HepG2 (cell line): ENCODE measurements at regions of chr4 and their contacts with region 1.

Region 1: GRCh38 chr4:5998333-5998936 is 19.8 kb downstream of the C4orf50 start:
- DNase-seq: peak; percentile 50
- ATAC-seq: peak; percentile 91
- H3K4me3 ChIP-seq: no peak overlapping the region
- H3K27ac ChIP-seq: no peak overlapping the region
- H3K4me1 ChIP-seq: no peaks in the 10 kb centered on the region
- H3K27me3 ChIP-seq: peaks cover 6 to 42% of the 10 kb centered on the region in 2 experiments; a peak in 4 of 5 replicates
- CTCF ChIP-seq: peak; percentile 92
- EP300 ChIP-seq: no peak
- POLR2A ChIP-seq: no peak
- RAD21 ChIP-seq: peak; percentile 75

Region 2: GRCh38 chr4:5979976-5980375 is 18.5 kb before region 1 on chr4:
- CTCF ChIA-PET with region 1: no interaction called
- POLR2A ChIA-PET with region 1: no interaction called
- in situ Hi-C with region 1: no loop called
- intact Hi-C with region 1: no loop called
- DNase-seq: no peak
- ATAC-seq: peak; percentile 57; the same call in 2 of the 3 replicates
- H3K4me3 ChIP-seq: no peak overlapping the region
- H3K27ac ChIP-seq: no peak overlapping the region
- H3K4me1 ChIP-seq: no peaks in the 10 kb centered on the region
- H3K27me3 ChIP-seq: peaks cover 5% of the 10 kb centered on the region in 2 experiments; a peak in 2 of 5 replicates
- CTCF ChIP-seq: peak; percentile 61
- EP300 ChIP-seq: no peak
- POLR2A ChIP-seq: no peak
- RAD21 ChIP-seq: no peak

Region 3: GRCh38 chr4:6087673-6088341 is 89.4 kb after region 1 on chr4:
- CTCF ChIA-PET with region 1: interaction called, 35 read pairs
- POLR2A ChIA-PET with region 1: no interaction called
- in situ Hi-C with region 1: loop called (anchors 5 kb)
- intact Hi-C with region 1: loop called (anchors 1 kb)
- DNase-seq: peak; percentile 39
- ATAC-seq: peak; percentile 88
- H3K4me3 ChIP-seq: no peak overlapping the region
- H3K27ac ChIP-seq: no peak overlapping the region
- H3K4me1 ChIP-seq: no peaks in the 10 kb centered on the region
- H3K27me3 ChIP-seq: peaks cover 0 to 8% of the 10 kb centered on the region in 2 experiments; a peak in 1 of 5 replicates
- CTCF ChIP-seq: peak; percentile 73
- EP300 ChIP-seq: no peak
- POLR2A ChIP-seq: no peak
- RAD21 ChIP-seq: peak; percentile 38; the same call in 1 of the 2 replicates

Region 4: DNA sequence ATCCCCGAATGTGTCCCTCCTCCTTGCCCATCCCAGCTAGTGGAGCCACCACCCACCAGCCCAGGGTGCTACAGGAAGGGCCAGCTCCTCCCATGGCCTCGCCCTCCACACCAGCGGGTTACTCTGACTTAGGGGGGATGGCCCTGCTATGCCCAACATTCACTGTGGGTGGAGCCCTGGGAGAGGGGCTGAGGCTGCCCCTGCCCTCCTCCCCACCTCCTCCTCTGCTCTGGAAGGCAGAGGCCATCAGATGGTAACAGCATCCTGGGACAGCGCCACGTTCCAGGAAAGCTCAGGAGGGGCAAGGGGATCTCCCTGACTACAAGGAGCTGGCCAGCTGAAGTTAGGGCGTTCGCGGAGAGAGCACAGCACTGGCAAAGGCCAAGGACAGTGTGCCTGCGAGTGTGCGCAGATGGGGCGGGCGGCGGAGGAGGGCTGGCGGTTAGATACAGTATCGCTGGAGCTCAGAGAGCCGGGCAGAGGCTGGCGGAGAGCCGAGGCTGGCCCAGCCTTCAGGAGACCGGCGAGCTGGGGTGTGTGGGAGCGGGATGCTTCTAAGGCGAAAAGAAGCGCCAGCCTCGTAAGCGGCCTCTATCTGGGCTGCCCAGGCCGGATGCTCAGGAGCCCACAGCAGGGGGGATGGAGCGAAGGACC is 200.5 kb after region 1 on chr4:
- CTCF ChIA-PET with region 1: no interaction called
- POLR2A ChIA-PET with region 1: no interaction called
- in situ Hi-C with region 1: no loop called
- intact Hi-C with region 1: loop called (anchors 10 kb)
- DNase-seq: no peak
- ATAC-seq: peak; percentile 17; the same call in 2 of the 3 replicates
- H3K4me3 ChIP-seq: no peak overlapping the region
- H3K27ac ChIP-seq: no peak overlapping the region
- H3K4me1 ChIP-seq: 0 out of 2 replicates have a peak, but pooled peaks cover 7% of the 10 kb centered on the region
- H3K27me3 ChIP-seq: peaks cover 7 to 56% of the 10 kb centered on the region in 2 experiments
- CTCF ChIP-seq: peak; percentile 8; the same call in 1 of the 2 replicates
- EP300 ChIP-seq: no peak
- POLR2A ChIP-seq: no peak
- RAD21 ChIP-seq: no peak